ENCODE measurements at regions of chr9 and their contacts with region 1.

Region 1: GRCh38 chr9:131334629-131335367 is 45.3 kb downstream of the PLPP7 start:
- DNase-seq: no peak
- H3K4me3 Mint-ChIP-seq: no peak overlapping the region
- H3K27ac Mint-ChIP-seq: no peak overlapping the region
- H3K4me1 Mint-ChIP-seq: no peaks in the 10 kb centered on the region
- H3K27me3 Mint-ChIP-seq: no peaks in the 10 kb centered on the region

Region 2: DNA sequence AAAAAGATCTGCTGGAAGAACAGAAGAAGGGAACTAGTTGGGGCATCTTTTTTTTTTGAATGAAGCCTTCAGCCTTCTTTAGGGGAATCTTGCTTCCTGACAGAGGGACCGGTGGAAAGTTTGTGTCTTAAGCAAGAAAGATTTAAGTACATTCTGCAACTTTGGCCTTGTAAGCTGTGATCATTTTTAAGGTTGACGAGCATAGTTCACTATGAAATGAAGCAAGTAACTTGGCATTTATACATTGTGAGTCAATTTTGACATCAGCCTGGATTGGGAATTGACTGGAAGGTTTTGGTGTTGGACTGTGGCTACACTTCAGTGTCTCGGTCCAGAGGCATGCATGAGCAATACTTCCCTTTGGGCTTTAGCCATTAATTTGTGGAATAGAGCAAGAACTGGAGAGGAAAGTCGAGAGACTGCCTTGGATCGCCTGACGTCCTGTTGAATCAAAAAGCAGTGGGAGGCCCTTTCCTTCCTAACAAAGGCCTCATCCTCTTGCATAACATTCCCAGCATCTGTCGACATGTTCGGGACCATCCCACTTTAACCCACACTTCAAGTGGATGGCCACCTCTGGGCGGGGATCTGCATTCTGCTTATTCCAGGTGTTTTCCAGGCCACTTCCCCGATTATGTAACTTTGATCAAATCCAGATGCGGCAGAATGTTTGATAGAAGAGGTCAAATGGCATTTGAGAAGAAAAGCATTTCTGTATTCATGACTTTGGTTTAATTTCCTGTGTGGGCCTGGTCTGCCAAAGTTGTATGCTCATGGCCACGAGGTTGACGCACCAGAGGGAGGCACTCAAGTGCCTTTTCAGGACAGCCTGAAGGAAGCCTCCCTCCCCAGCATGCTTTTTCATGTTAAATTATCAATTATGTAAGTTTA is 487.2 kb before region 1 on chr9:
- CTCF ChIA-PET with region 1: no interaction called
- POLR2A ChIA-PET with region 1: no interaction called
- intact Hi-C with region 1: no loop called
- DNase-seq: no peak
- H3K4me3 Mint-ChIP-seq: no peak overlapping the region
- H3K27ac Mint-ChIP-seq: no peak overlapping the region
- H3K4me1 Mint-ChIP-seq: peaks cover 5% of the 10 kb centered on the region
- H3K27me3 Mint-ChIP-seq: no peaks in the 10 kb centered on the region

Region 3: GRCh38 chr9:131153595-131153994 is 181.2 kb before region 1 on chr9:
- CTCF ChIA-PET with region 1: interaction called, 11 read pairs
- POLR2A ChIA-PET with region 1: no interaction called
- intact Hi-C with region 1: no loop called
- DNase-seq: no peak
- H3K4me3 Mint-ChIP-seq: no peak overlapping the region
- H3K27ac Mint-ChIP-seq: no peak overlapping the region
- H3K4me1 Mint-ChIP-seq: peaks cover 5% of the 10 kb centered on the region
- H3K27me3 Mint-ChIP-seq: no peaks in the 10 kb centered on the region

Region 4: DNA sequence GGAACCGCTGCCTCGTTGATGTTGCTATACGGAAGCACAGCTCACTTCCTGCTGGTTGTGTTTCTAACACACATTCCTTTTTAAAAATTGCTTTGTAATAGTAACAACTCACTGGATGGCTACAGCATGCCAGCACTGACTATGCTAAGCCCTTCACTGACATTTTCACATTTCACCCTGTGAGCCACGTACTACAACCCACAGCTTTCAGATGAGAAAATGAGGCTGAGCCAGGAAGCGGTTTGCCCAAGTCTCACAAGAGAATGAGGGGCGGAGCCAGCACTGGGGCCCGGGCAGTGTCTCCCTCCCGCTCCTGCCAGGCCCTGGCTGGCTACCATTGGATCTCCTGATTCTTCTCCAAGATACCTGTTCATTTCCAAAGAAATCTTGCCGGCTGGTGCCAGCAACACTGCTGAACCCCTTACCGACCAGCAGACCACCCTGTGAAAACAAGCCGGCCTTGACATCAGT is 96.8 kb before region 1 on chr9:
- CTCF ChIA-PET with region 1: interaction called, 5 read pairs
- POLR2A ChIA-PET with region 1: interaction called, 3 read pairs
- intact Hi-C with region 1: loop called (anchors 5 kb)
- DNase-seq: peak; percentile 93
- H3K4me3 Mint-ChIP-seq: peak overlapping the region; percentile 59
- H3K27ac Mint-ChIP-seq: peak overlapping the region; percentile 94
- H3K4me1 Mint-ChIP-seq: peaks cover 47% of the 10 kb centered on the region
- H3K27me3 Mint-ChIP-seq: no peaks in the 10 kb centered on the region

Region 5: GRCh38 chr9:131349881-131350563 is 15.2 kb after region 1 on chr9:
- CTCF ChIA-PET with region 1: interaction called, 24 read pairs
- POLR2A ChIA-PET with region 1: no interaction called
- intact Hi-C with region 1: no loop called
- DNase-seq: peak; percentile 92
- H3K4me3 Mint-ChIP-seq: no peak overlapping the region
- H3K27ac Mint-ChIP-seq: no peak overlapping the region
- H3K4me1 Mint-ChIP-seq: peaks cover 5% of the 10 kb centered on the region
- H3K27me3 Mint-ChIP-seq: no peaks in the 10 kb centered on the region

Region 6: GRCh38 chr9:131464354-131465000 is 129.7 kb after region 1 on chr9:
- CTCF ChIA-PET with region 1: no interaction called
- POLR2A ChIA-PET with region 1: no interaction called
- intact Hi-C with region 1: no loop called
- DNase-seq: no peak
- H3K4me3 Mint-ChIP-seq: no peak overlapping the region
- H3K27ac Mint-ChIP-seq: no peak overlapping the region
- H3K4me1 Mint-ChIP-seq: no peaks in the 10 kb centered on the region
- H3K27me3 Mint-ChIP-seq: no peaks in the 10 kb centered on the region

Region 7: GRCh38 chr9:131554088-131554864 is 219.5 kb after region 1 on chr9:
- CTCF ChIA-PET with region 1: no interaction called
- POLR2A ChIA-PET with region 1: no interaction called
- intact Hi-C with region 1: no loop called
- DNase-seq: no peak
- H3K4me3 Mint-ChIP-seq: no peak overlapping the region
- H3K27ac Mint-ChIP-seq: no peak overlapping the region
- H3K4me1 Mint-ChIP-seq: no peaks in the 10 kb centered on the region
- H3K27me3 Mint-ChIP-seq: peaks cover 30% of the 10 kb centered on the region

Measured in activated CD4-positive, alpha-beta memory T cell treated with anti-CD3 and anti-CD28 coated beads for 36 hours (primary cell).